WTC11 (cell line): ENCODE measurements at regions of chr20 and their contacts with region 1.

Region 1: DNA sequence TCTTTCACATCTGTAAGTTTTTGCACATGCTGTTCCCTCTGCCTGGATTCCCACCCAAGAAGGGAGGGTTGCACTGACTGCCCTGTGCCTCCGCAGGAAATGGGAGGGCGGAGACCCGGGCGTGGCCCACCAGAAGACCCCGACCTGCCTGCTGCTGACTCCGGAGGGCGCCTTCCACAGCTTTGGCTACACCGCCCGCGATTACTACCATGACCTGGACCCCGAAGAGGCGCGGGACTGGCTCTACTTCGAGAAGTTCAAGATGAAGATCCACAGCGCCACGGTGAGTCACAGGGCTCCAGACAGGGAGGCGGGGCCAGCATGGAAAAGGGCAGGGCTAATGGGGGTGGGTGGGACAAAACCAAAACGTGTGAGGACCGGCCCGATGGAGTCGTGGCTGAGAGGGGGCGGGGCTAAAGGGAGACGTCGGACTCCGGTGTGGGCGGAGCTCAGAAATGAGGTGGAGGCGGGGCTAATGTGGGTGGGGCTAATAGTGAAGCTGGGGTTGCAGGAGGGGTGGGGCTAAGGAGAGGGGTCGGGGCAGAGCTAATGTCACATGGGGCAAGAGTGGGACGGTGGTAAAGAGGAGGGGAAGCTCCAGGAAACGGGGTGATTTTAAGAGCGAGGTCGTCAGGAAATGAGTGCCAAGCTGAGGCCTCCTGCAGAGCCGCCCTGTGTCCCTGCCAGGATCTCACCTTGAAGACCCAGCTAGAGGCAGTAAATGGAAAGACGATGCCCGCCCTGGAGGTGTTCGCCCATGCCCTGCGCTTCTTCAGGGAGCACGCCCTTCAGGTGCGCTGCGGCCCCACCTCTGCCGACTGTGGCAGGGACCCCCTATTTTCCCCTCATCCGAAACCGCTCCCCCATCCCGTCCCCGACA is 12.6 kb downstream of the HSPA12B start:
- DNase-seq: peak; percentile 100
- ATAC-seq: peak; percentile 85
- H3K4me3 Mint-ChIP-seq: peak overlapping the region; percentile 89
- H3K27ac Mint-ChIP-seq: peak overlapping the region; percentile 88
- H3K4me1 Mint-ChIP-seq: peaks cover 21% of the 10 kb centered on the region
- H3K27me3 Mint-ChIP-seq: peaks cover 44% of the 10 kb centered on the region
- CTCF ChIP-seq: no peak

Region 2: GRCh38 chr20:3679749-3680700 is 65.0 kb before region 1 on chr20:
- CTCF ChIA-PET with region 1: interaction called, 17 read pairs
- POLR2A ChIA-PET with region 1: interaction called, 7 read pairs
- DNase-seq: peak; percentile 42
- ATAC-seq: peak; percentile 8
- H3K4me3 Mint-ChIP-seq: peak overlapping the region; percentile 34
- H3K27ac Mint-ChIP-seq: no peak overlapping the region
- H3K4me1 Mint-ChIP-seq: peaks cover 37% of the 10 kb centered on the region
- H3K27me3 Mint-ChIP-seq: peaks cover 25% of the 10 kb centered on the region
- CTCF ChIP-seq: no peak

Region 3: GRCh38 chr20:3696200-3696599 is 48.8 kb before region 1 on chr20:
- CTCF ChIA-PET with region 1: interaction called, 46 read pairs
- POLR2A ChIA-PET with region 1: no interaction called
- DNase-seq: no peak
- ATAC-seq: no peak
- H3K4me3 Mint-ChIP-seq: no peak overlapping the region
- H3K27ac Mint-ChIP-seq: no peak overlapping the region
- H3K4me1 Mint-ChIP-seq: no peaks in the 10 kb centered on the region
- H3K27me3 Mint-ChIP-seq: no peaks in the 10 kb centered on the region
- CTCF ChIP-seq: peak; percentile 67; the same call in 1 of the 2 replicates

Region 4: DNA sequence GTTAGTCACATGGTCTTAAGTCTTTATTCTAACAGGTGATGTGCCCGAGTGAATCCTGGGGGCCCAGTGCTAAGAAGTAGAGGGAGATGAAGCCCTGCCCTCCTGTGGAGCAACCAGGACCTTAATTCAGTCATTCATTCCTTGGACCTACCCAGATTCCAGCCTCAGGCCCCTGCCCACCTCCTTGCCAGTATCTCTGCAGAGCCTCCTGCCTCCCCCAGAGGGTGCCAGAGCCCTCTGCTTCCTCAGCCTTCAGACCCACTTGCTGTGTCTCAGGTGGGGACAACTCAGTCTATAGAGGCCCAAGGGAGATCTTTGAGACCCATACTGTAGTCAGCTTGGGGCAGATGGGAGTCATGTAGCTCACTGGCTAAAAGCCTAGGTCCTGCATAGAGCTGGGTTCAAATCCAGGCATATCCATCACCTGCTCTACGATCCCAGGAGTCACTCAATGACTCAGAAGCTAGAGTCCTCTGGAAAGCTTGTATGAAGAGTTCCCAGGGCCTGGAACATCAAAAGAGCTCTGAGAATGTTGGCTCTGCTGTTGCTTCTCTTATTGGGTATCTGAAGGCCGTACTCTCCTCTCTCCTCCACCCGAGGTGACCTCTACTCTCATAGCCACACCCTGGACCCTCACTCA is 28.7 kb before region 1 on chr20:
- CTCF ChIA-PET with region 1: interaction called, 88 read pairs
- POLR2A ChIA-PET with region 1: no interaction called
- DNase-seq: peak; percentile 70
- ATAC-seq: peak; percentile 98
- H3K4me3 Mint-ChIP-seq: no peak overlapping the region
- H3K27ac Mint-ChIP-seq: 0 out of 2 replicates have a peak overlapping the region, but pooled peaks have one; percentile 8
- H3K4me1 Mint-ChIP-seq: peaks cover 8% of the 10 kb centered on the region
- H3K27me3 Mint-ChIP-seq: no peaks in the 10 kb centered on the region
- CTCF ChIP-seq: peak; percentile 41; the same call in 1 of the 2 replicates

Region 5: GRCh38 chr20:3732327-3733118 is 12.5 kb before region 1 on chr20 and contains the start of gene HSPA12B:
- CTCF ChIA-PET with region 1: interaction called, 43 read pairs
- POLR2A ChIA-PET with region 1: interaction called, 4 read pairs
- DNase-seq: peak; percentile 51
- ATAC-seq: peak; percentile 69
- H3K4me3 Mint-ChIP-seq: peak within 1 kb of the TSS; percentile 64
- H3K27ac Mint-ChIP-seq: no peak within 1 kb of the TSS
- H3K4me1 Mint-ChIP-seq: peaks cover 23% of the 10 kb centered on the region
- H3K27me3 Mint-ChIP-seq: peaks cover 43% of the 10 kb centered on the region
- CTCF ChIP-seq: no peak
- total RNA-seq, gene HSPA12B: 6.3 to 8.5 TPM (median 8.2 TPM) in 3 replicates